Mammary epithelial cell (primary cell): ENCODE measurements at regions of chr6 and their contacts with region 1.

Region 1: DNA sequence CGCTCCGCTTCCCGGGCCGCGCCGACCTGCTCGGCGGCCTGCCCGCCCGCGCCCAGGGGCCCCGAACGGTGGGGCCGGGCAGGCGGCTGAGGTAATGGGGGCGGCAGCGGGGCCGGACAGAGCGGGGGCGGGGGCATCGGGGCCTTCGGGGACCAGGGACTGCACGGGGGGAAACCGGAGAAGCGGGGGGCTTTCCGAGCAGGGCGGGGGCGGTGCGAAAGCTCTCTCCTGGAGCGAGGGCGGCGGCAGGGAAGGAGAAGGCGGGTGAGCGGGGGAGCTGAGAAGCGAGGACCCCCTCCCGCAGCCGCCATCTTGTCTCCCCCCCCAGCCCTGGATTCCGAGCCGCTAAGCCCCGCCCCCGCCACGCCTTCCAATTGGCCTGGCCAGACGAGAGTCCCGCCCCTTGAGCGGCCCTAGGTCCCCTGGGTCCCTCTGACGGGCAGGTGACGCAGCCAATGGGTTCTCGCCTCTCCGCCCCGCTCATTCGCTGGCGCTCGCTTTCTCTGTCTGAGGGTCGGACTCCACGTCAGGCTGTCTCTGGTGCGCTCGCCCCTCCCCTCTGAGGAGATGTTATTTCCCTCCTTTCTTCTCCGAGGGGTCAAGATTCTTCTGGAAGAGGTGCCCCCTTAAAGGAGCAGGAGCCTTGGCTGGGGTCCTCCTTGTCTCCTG is 470 bp downstream of the BRPF3 start:
- DNase-seq: peak; percentile 92
- H3K4me3 ChIP-seq: peak overlapping the region; percentile 57 to 84 (median 59)
- H3K27ac ChIP-seq: no peak overlapping the region
- H3K4me1 ChIP-seq: peaks cover 8% of the 10 kb centered on the region
- H3K27me3 ChIP-seq: no peaks in the 10 kb centered on the region
- CTCF ChIP-seq: no peak

Region 2: GRCh38 chr6:35948725-35949124 is 248.3 kb before region 1 on chr6:
- CTCF ChIA-PET with region 1: no interaction called
- dilution Hi-C with region 1: no loop called
- in situ Hi-C with region 1: no loop called
- intact Hi-C with region 1: no loop called
- DNase-seq: no peak
- H3K4me3 ChIP-seq: no peak overlapping the region
- H3K27ac ChIP-seq: no peak overlapping the region
- H3K4me1 ChIP-seq: peaks cover 13% of the 10 kb centered on the region
- H3K27me3 ChIP-seq: no peaks in the 10 kb centered on the region
- CTCF ChIP-seq: peak in 1 of 2 donors; percentile 31

Region 3: GRCh38 chr6:36027501-36028087 is 169.4 kb before region 1 on chr6 and contains the start of gene MAPK14:
- CTCF ChIA-PET with region 1: no interaction called
- dilution Hi-C with region 1: no loop called
- in situ Hi-C with region 1: no loop called
- intact Hi-C with region 1: loop called (anchors 1 kb)
- DNase-seq: peak; percentile 99
- H3K4me3 ChIP-seq: peak within 1 kb of the TSS; percentile 65 to 100 (median 98)
- H3K27ac ChIP-seq: peak within 1 kb of the TSS; percentile 91
- H3K4me1 ChIP-seq: peaks cover 5% of the 10 kb centered on the region
- H3K27me3 ChIP-seq: no peaks in the 10 kb centered on the region
- CTCF ChIP-seq: peak; percentile 74 to 96
- total RNA-seq, gene MAPK14: 44.4 to 66.8 TPM

Region 4: DNA sequence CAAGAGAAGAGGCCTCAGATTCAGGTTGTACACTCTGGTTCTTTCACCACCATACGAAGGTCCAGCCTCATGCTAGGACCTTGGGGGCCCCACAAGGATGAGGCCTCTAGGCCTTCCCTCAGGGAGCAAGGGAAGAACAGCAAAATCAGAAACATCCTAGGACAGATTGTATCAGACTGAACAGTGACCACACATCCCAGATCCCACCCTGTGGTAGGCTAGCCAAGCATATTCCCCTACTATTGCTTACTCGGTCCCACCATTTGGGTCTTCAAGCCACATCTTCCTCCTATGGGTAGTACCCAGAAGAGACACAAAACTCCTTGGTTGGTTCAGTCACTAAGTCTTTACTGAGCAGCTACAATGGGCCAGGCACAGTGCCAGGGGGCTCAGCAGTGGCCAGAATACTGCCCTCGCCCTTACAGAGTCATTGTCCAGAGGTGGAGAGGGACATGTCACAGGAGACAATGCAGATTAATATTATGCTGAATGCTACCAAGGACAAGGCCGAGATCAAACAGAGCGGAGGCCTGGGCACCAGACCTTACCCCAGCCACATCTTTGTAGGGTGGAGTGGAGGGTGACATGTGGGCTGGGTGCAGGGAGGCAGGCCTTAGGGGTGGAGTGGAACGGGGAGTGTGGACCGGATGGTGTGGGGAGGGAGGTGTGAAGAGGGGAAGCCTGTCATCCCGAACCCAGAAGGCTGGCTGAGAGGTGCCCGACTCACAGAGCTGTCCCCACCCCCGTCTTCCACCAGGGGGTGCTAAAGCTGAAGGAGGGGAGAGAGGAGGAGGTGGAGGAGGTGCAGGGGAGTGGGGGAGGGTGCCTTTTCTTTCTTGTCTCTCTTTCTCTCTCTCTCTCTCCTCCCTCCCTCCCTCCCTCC is 73.5 kb before region 1 on chr6:
- CTCF ChIA-PET with region 1: no interaction called
- dilution Hi-C with region 1: no loop called
- in situ Hi-C with region 1: loop called in 1 of 2 experiments (anchors 10 kb)
- intact Hi-C with region 1: loop called (anchors 1 kb)
- DNase-seq: peak; percentile 64
- H3K4me3 ChIP-seq: no peak overlapping the region
- H3K27ac ChIP-seq: no peak overlapping the region
- H3K4me1 ChIP-seq: peaks cover 15% of the 10 kb centered on the region
- H3K27me3 ChIP-seq: no peaks in the 10 kb centered on the region
- CTCF ChIP-seq: peak; percentile 68 to 87